GM10248 (cell line): ENCODE measurements at regions of chr18 and their contacts with region 1.

Region 1: DNA sequence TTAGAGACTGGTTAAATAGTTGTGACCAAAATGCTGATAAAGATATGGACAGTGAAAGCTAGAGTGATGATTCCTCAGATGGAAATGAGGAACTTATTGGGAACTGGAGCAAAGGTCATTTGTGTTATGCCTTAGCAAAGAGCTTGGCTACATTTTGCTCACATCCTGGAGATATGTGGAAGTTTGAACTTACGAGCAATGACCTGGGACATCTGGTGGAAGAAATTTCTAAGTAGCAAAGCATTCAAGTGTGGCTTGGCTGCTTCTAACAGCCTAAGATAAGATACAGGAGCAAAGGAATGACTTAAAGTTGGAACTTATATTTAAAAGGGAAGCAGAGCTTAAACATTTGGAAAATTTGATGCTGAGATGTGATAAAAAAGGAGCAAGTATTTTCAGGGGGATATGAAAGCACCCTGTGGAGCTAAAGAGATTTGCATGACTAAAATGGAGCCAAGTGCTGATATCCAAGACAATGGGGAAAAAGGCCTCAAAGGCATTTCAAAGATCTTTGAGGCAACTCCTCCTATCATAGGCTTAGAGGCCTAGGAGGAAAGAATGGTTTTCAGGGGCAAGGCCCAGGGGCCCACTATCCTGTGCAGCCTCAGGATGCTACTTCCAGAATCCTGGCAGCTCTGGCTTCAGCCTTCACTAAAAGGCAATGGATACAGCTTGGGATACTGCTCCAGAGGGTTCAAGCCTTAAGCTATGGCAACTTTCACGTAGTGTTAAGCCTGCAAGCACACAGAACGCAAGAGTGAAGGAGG is 124.1 kb upstream of the KLHL14 start:
- DNase-seq: no peak
- CTCF ChIP-seq: no peak

Region 2: DNA sequence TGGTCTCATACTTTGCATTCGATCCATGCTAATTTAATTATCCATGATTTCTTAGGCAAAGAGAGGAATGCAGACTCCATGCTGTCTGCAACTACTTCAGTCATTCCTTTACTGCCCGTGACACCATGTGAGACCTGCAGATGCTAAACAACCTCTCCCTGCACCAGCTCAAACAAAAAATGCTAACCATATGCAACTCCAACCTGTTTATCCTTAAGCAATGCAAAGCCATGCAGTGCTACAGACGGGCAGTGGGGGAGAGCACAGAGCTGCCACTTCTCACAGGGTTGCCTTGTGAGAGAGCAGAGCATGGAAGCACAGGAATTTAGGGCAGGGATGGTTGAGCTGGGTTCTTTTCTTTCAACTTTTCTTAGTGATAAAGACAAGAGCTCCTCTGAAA is 49.3 kb before region 1 on chr18:
- CTCF ChIA-PET with region 1: no interaction called
- POLR2A ChIA-PET with region 1: no interaction called
- DNase-seq: no peak
- CTCF ChIP-seq: no peak

Region 3: GRCh38 chr18:32868406-32868805 is 28.6 kb before region 1 on chr18:
- CTCF ChIA-PET with region 1: interaction called, 11 read pairs
- POLR2A ChIA-PET with region 1: no interaction called
- DNase-seq: no peak
- CTCF ChIP-seq: no peak